ENCODE measurements at regions of chr1 and their contacts with region 1.

Region 1: DNA sequence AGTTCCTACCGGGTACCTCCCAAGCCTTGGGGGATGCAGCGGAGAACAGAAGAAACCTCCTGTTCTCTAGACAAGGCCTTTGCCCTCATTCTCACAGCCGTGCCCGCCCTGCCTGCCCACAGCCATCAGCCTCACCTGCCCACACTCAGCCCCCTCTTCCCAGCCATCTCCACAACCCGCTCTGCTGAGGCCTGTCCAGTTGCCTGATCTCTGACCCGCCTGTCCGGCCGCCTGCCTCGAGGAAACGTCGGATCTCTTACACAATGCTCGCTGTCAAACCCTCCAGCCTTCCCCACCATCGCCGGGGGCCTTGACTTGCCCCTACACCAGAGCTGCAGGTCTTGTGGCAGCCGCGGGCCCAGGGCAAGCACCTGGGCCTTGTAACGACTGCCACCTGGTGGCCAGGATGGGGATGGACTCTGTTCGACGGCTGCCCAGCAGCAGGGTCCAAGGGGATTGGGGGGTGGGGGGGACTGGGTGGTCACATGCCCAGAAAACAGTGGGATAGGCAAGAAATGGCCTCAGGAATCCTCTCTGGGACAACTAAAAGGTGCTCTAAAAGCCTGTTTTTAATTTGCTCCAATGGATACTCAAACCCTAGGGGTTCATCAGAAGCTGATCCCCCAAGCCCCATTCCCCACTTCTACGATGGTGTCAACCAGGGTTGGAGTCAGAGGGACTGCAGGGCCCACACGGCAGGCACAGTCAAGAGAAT is 31.0 kb downstream of the SLC45A1 start:
- DNase-seq: peak; percentile 77
- H3K4me3 ChIP-seq: no peak overlapping the region
- H3K27ac ChIP-seq: no peak overlapping the region
- H3K4me1 ChIP-seq: no peaks in the 10 kb centered on the region
- CTCF ChIP-seq: peak; percentile 87

Region 2: DNA sequence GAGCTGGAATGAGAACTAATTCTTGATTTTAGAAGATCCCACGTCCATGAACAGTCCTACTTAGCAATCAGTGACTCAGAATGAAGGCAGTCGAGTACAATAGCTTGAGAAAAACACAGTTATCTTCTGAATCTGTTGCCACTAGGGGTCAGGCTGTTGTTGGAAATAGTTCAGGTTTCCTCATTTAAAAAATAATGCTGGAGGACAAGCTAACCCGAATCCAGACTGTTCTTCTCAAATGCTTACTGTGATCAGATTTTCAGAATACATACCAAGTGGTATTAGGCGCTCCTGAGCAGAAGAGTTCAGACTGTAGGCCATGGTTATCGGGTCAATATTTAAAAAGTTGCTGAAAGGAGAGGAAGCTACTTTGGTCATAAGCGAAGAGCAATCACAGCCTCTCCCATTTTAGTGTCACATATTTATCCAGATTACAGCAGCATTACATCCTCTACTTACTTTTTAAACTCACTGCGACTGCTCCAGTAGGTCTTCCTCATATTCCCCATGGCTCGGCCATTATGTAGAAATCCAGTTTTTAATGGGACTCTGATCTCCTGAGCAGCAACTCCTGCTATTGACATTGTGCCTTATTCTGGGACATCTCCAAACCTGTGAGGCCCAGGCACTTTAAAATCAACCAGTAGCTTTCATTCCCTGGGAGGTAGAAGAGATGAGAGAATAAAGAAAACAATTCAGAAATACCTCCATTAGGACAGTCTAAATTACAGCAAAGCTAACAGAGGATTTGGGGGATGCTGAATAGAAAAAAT is 333.7 kb before region 1 on chr1:
- CTCF ChIA-PET with region 1: no interaction called
- POLR2A ChIA-PET with region 1: no interaction called
- intact Hi-C with region 1: loop called (anchors 1 kb)
- DNase-seq: peak; percentile 64
- H3K4me3 ChIP-seq: no peak overlapping the region
- H3K27ac ChIP-seq: no peak overlapping the region
- H3K4me1 ChIP-seq: no peaks in the 10 kb centered on the region
- CTCF ChIP-seq: peak; percentile 88

Region 3: GRCh38 chr1:8727809-8728213 is 378.9 kb after region 1 on chr1:
- CTCF ChIA-PET with region 1: no interaction called
- POLR2A ChIA-PET with region 1: no interaction called
- intact Hi-C with region 1: loop called (anchors 10 kb)
- DNase-seq: no peak
- H3K4me3 ChIP-seq: no peak overlapping the region
- H3K27ac ChIP-seq: no peak overlapping the region
- H3K4me1 ChIP-seq: peaks cover 29% of the 10 kb centered on the region
- CTCF ChIP-seq: no peak

Measured in OCI-LY7 (cell line).